ENCODE measurements at regions of chr6 and their contacts with region 1.

Region 1: DNA sequence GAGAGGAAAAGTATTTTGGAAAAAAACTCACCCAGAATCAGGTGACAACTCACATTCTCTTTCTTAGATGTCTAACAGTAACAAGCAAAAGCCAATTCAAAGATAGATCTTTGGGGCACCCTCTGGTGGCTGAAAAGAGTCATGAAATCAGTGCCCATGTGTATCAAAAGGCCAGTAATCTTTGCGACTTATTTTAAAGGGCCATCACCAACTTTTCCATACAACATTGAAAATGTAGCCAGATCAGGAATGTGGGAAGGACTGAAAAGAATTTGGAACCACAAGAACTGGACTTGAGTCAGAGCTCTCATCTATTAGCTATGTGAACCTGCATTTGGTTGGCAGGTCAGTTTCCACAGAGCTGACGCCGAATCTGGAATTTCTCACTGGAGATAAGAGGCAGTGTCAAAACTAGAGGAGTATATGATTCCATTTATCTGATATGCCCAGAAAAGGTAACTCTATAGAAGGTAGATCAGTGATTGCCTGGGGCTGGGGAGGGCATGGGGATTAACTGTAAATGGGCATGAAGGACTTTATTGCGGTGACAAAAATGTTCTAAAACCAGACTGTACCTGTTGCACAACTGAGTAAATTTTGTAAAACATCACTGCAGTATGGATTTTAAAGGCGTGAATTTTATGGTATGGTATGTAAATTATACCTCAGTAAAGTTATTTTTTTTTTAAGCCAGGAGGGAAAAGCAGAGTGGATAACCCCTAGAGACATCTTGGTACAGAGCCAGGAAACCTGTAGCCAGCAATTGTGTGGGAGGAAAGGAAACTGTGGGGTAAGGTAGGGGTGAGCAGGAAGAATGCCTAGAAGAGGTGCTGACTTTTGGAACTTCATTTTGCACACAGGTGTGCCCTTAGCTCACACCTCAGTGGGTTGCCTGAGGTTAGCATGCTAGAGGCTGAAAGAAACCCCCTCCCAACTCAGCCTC is 117.1 kb upstream of the ASF1A start:
- DNase-seq: peak; percentile 79
- H3K4me3 Mint-ChIP-seq: no peak overlapping the region
- H3K27ac Mint-ChIP-seq: no peak overlapping the region
- H3K4me1 Mint-ChIP-seq: peaks cover 20% of the 10 kb centered on the region
- H3K27me3 Mint-ChIP-seq: no peaks in the 10 kb centered on the region

Region 2: GRCh38 chr6:118283766-118284165 is 493.1 kb before region 1 on chr6:
- CTCF ChIA-PET with region 1: no interaction called
- POLR2A ChIA-PET with region 1: no interaction called
- intact Hi-C with region 1: loop called (anchors 5 kb)
- DNase-seq: peak; percentile 39
- H3K4me3 Mint-ChIP-seq: no peak overlapping the region
- H3K27ac Mint-ChIP-seq: no peak overlapping the region
- H3K4me1 Mint-ChIP-seq: no peaks in the 10 kb centered on the region
- H3K27me3 Mint-ChIP-seq: no peaks in the 10 kb centered on the region

Region 3: DNA sequence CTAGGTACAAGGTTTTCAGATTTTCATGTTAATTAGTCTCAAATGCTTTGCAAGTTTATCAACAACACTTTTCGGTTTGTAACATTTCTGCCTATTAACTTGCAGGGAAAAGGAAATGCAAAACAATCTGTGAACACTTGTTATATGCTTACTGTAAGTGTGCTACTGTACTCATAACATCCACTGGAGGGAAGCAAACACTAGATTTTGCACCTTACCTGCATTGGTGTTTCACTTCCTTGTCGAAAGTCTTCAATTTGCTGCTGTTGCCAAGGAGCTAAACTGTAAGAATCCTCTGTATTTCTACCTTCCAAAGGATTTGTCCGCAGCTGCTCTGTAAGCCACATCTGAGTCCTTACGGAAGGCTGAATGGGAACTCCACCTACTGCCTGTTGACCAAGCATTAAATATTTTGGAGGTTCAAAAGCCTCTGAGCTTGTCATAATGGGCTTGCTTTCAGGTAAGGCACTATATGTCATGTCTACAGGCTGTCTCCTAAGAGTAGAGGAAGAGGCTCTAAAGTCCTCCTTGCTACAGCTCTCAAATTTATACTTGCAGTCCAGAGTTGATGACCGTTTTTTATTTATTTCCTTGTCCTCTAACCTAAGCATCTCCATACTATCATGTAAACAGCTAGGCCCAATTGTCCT is 211.4 kb before region 1 on chr6:
- CTCF ChIA-PET with region 1: interaction called, 25 read pairs
- POLR2A ChIA-PET with region 1: no interaction called
- intact Hi-C with region 1: loop called (anchors 1 kb)
- DNase-seq: no peak
- H3K4me3 Mint-ChIP-seq: no peak overlapping the region
- H3K27ac Mint-ChIP-seq: peak overlapping the region; percentile 11
- H3K4me1 Mint-ChIP-seq: peaks cover 17% of the 10 kb centered on the region
- H3K27me3 Mint-ChIP-seq: no peaks in the 10 kb centered on the region

Region 4: DNA sequence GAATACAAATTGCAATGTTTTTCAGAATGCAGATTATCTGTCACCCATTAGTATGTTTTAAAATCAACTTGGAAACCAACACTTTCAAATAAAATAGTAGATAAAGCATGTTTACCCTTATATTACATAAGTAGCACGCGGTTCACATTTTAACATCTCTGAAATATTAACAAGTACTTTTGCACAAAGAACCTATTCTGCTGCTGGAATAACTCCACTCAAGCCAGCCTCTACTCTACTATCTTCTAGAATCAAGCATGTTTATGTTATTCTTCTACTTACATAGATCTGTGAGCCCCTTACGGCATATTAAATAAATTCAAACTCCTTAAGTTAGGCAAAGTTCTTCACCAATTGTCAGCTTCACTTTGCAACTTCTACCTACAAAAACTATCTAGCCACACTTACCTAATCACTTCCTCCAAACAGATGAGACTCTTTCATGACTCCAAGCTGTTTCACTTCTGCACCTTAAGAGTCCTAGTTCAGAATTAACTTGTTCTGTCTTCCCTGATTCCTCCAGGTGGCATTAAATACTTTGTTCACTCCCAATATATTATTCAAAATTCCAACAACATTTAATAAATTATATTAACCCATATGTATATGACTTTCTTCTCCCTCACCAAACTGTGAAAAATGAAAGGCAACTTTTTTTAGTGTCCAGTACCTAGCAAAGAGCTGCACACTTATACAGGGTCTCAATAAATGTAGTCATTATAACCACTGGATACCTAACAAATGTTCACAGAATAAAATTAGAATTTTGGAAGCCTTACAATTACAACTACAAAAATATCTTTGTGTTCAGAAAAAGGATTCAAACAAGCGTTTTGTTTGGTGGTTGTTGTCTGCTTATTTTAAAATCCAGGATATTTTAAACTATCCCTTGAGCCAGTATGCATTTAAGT is 137.6 kb before region 1 on chr6:
- CTCF ChIA-PET with region 1: no interaction called
- POLR2A ChIA-PET with region 1: no interaction called
- intact Hi-C with region 1: loop called (anchors 5 kb)
- DNase-seq: no peak
- H3K4me3 Mint-ChIP-seq: no peak overlapping the region
- H3K27ac Mint-ChIP-seq: no peak overlapping the region
- H3K4me1 Mint-ChIP-seq: peaks cover 56% of the 10 kb centered on the region
- H3K27me3 Mint-ChIP-seq: no peaks in the 10 kb centered on the region

Region 5: GRCh38 chr6:118651282-118652050 is 125.4 kb before region 1 on chr6 and contains the start of gene CEP85L:
- CTCF ChIA-PET with region 1: no interaction called
- POLR2A ChIA-PET with region 1: no interaction called
- intact Hi-C with region 1: loop called (anchors 1 kb)
- DNase-seq: peak; percentile 93
- H3K4me3 Mint-ChIP-seq: peak within 1 kb of the TSS; percentile 87
- H3K27ac Mint-ChIP-seq: peak within 1 kb of the TSS; percentile 93
- H3K4me1 Mint-ChIP-seq: peaks cover 53% of the 10 kb centered on the region
- H3K27me3 Mint-ChIP-seq: no peaks in the 10 kb centered on the region
- total RNA-seq, gene CEP85L: 21.1 to 23.3 TPM

Region 6: DNA sequence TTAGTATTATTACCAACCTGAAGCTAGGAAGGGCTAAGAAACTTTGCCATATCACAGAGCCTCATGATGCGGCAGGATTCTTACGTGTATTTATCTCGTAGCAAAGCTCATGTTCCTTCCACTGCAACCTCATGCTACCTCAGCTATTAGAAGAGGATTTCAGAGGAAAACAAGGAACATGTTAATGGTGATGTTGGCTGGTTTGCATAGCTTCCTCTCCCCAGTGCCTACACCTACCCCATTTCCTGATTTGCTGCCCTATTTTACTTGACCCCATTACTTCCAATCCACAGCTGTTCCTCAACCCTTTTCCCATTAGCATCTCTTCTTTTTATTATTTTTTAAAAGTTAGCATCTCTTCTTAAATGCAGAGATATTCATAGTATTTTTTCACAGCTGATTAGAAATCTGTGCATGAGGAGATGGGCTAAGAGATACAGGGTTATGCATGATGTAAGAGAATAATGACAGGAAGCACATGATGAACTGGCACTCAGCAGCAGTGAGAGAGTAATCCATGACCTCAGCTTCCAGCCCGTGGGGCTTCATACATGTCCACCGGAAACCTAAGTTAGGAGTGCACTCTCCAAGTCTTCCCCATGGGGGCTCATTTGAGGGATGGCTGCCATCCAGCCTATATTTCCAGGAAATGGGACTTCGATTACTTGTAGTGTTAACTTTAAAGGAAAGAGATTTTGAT is 11.0 kb after region 1 on chr6:
- CTCF ChIA-PET with region 1: interaction called, 10 read pairs
- POLR2A ChIA-PET with region 1: no interaction called
- intact Hi-C with region 1: loop called (anchors 1 kb)
- DNase-seq: peak; percentile 37
- H3K4me3 Mint-ChIP-seq: no peak overlapping the region
- H3K27ac Mint-ChIP-seq: peak overlapping the region; percentile 40
- H3K4me1 Mint-ChIP-seq: peaks cover 32% of the 10 kb centered on the region
- H3K27me3 Mint-ChIP-seq: no peaks in the 10 kb centered on the region

Region 7: GRCh38 chr6:118918326-118918725 is 141.4 kb after region 1 on chr6:
- CTCF ChIA-PET with region 1: no interaction called
- POLR2A ChIA-PET with region 1: no interaction called
- intact Hi-C with region 1: no loop called
- DNase-seq: no peak
- H3K4me3 Mint-ChIP-seq: no peak overlapping the region
- H3K27ac Mint-ChIP-seq: no peak overlapping the region
- H3K4me1 Mint-ChIP-seq: peaks cover 4% of the 10 kb centered on the region
- H3K27me3 Mint-ChIP-seq: no peaks in the 10 kb centered on the region